Right lobe of liver (tissue), 6 donors: ENCODE measurements at regions of chr13 and their contacts with region 1.

Region 1: GRCh38 chr13:45280751-45281634 is 60.0 kb downstream of the TPT1 start:
- DNase-seq: peak; percentile 69 to 76 (median 73)
- ATAC-seq: peak; percentile 99 to 100 (median 100)
- H3K4me3 ChIP-seq: no peak overlapping the region
- H3K27ac ChIP-seq: no peak overlapping the region
- H3K4me1 ChIP-seq: no peaks in the 10 kb centered on the region
- H3K27me3 ChIP-seq: no peaks in the 10 kb centered on the region
- CTCF ChIP-seq: peak; percentile 63 to 87 (median 78)
- POLR2A ChIP-seq: no peak

Region 2: GRCh38 chr13:45047394-45048310 is 233.3 kb before region 1 on chr13:
- intact Hi-C with region 1: loop called (anchors 5 kb)
- DNase-seq: peak; percentile 61 to 77 (median 65)
- ATAC-seq: peak; percentile 96 to 99 (median 98)
- H3K4me3 ChIP-seq: peak overlapping the region; percentile 32 to 52 (median 43)
- H3K27ac ChIP-seq: no peak overlapping the region
- H3K4me1 ChIP-seq: no peaks in the 10 kb centered on the region
- H3K27me3 ChIP-seq: no peaks in the 10 kb centered on the region
- CTCF ChIP-seq: peak; percentile 82 to 94 (median 88)
- POLR2A ChIP-seq: no peak

Region 3: DNA sequence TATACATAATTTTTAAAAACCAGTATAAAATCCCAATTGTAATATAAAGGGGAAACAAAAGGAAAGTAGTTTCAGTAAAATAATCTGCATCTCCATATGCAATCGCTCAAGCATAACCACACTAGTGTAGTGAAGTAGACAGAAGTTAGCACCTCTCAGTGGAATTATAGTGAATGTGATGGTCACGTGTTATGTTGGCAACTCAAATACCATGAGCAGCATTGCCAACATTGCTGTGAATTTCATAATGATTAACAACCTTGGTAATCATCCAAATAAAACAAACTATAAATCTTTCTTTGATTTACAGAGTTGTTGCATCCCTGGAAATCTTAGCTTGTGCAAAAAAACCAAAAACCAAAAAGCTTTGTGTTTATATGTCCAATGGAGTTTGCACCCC is 647.9 kb after region 1 on chr13:
- intact Hi-C with region 1: no loop called
- DNase-seq: no peak
- ATAC-seq: peak in 3 of 4 donors; percentile 19 to 38 (median 33)
- H3K4me3 ChIP-seq: no peak overlapping the region
- H3K27ac ChIP-seq: no peak overlapping the region
- H3K4me1 ChIP-seq: no peaks in the 10 kb centered on the region
- H3K27me3 ChIP-seq: no peaks in the 10 kb centered on the region
- CTCF ChIP-seq: no peak
- POLR2A ChIP-seq: no peak